ENCODE measurements at regions of chr10 and their contacts with region 1.

Region 1: GRCh38 chr10:59906417-59907202 is at the start of gene CCDC6:
- DNase-seq: peak; percentile 91 to 93 (median 93)
- H3K4me3 ChIP-seq: peak within 1 kb of the TSS; percentile 80 to 81
- H3K4me3 Mint-ChIP-seq: peak within 1 kb of the TSS; percentile 93 to 98 (median 96)
- H3K27ac ChIP-seq: peak within 1 kb of the TSS; percentile 77
- H3K27ac Mint-ChIP-seq: peak within 1 kb of the TSS; percentile 89 to 99 (median 96)
- H3K4me1 ChIP-seq: peaks cover 56% of the 10 kb centered on the region
- H3K4me1 Mint-ChIP-seq: peaks cover 46 to 61% (median 57%) of the 10 kb centered on the region in 4 donors
- H3K27me3 ChIP-seq: no peaks in the 10 kb centered on the region
- H3K27me3 Mint-ChIP-seq: no peaks in the 10 kb centered on the region
- total RNA-seq, gene CCDC6: 20.9 to 22.5 TPM

Region 2: GRCh38 chr10:58268870-58269605 is 1637.6 kb before region 1 on chr10 and contains the start of gene CISD1:
- CTCF ChIA-PET with region 1: no interaction called
- POLR2A ChIA-PET with region 1: interaction called, 4 read pairs
- intact Hi-C with region 1: loop called (anchors 2 kb)
- DNase-seq: peak; percentile 90 to 98 (median 95)
- H3K4me3 ChIP-seq: peak within 1 kb of the TSS; percentile 70 to 84
- H3K4me3 Mint-ChIP-seq: peak within 1 kb of the TSS; percentile 95 to 98 (median 97)
- H3K27ac ChIP-seq: peak within 1 kb of the TSS; percentile 81
- H3K27ac Mint-ChIP-seq: peak within 1 kb of the TSS; percentile 95 to 99 (median 97)
- H3K4me1 ChIP-seq: peaks cover 38% of the 10 kb centered on the region
- H3K4me1 Mint-ChIP-seq: peaks cover 18 to 49% (median 32%) of the 10 kb centered on the region in 4 donors
- H3K27me3 ChIP-seq: no peaks in the 10 kb centered on the region
- H3K27me3 Mint-ChIP-seq: no peaks in the 10 kb centered on the region
- total RNA-seq, gene CISD1: 13.7 to 15.8 TPM

Region 3: GRCh38 chr10:59830601-59831259 is 75.9 kb before region 1 on chr10:
- CTCF ChIA-PET with region 1: interaction called, 5 read pairs
- POLR2A ChIA-PET with region 1: interaction called, 4 read pairs
- intact Hi-C with region 1: loop called (anchors 2 kb)
- DNase-seq: peak in 3 of 5 donors; percentile 5 to 14 (median 11)
- H3K4me3 ChIP-seq: no peak overlapping the region
- H3K4me3 Mint-ChIP-seq: no peak overlapping the region
- H3K27ac ChIP-seq: no peak overlapping the region
- H3K27ac Mint-ChIP-seq: peak overlapping the region in 1 of 7 donors; percentile 14
- H3K4me1 ChIP-seq: no peaks in the 10 kb centered on the region
- H3K4me1 Mint-ChIP-seq: peaks cover 18 to 49% (median 34%) of the 10 kb centered on the region in 4 donors
- H3K27me3 ChIP-seq: no peaks in the 10 kb centered on the region
- H3K27me3 Mint-ChIP-seq: no peaks in the 10 kb centered on the region

Region 4: DNA sequence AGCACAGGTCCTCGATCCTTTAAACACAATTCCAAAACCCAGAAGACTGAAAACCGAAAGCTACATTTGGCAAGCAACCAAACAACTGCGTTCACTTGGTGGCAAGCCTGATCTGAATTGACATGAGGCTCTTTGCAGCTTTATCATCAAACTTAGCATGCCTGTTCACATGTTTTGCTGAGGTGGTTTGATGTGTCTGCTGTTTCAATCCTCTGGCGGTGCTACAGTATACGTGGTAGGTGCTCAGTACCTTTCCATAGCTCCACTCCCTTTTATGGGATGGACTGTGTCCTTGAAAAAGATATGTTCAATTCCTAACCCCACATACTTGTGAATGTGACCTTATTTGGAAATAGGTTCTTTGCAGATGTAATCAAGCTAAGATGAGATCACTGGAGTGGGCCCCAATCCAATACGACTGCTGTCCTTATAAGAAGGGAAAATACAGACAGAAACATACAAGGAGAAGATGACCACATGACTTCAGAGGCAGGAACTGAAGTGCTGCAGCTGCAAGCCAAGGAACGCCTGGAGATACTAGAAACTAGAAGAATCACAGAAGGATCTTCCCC is 33.6 kb before region 1 on chr10:
- CTCF ChIA-PET with region 1: interaction called, 12 read pairs
- POLR2A ChIA-PET with region 1: interaction called, 5 read pairs
- intact Hi-C with region 1: no loop called
- DNase-seq: no peak
- H3K4me3 ChIP-seq: no peak overlapping the region
- H3K4me3 Mint-ChIP-seq: peak overlapping the region; percentile 28 to 79 (median 56)
- H3K27ac ChIP-seq: no peak overlapping the region
- H3K27ac Mint-ChIP-seq: peak overlapping the region in 4 of 7 donors; percentile 15 to 82 (median 20)
- H3K4me1 ChIP-seq: peaks cover 48% of the 10 kb centered on the region
- H3K4me1 Mint-ChIP-seq: peaks cover 52 to 84% (median 70%) of the 10 kb centered on the region in 4 donors
- H3K27me3 ChIP-seq: no peaks in the 10 kb centered on the region
- H3K27me3 Mint-ChIP-seq: no peaks in the 10 kb centered on the region

Region 5: DNA sequence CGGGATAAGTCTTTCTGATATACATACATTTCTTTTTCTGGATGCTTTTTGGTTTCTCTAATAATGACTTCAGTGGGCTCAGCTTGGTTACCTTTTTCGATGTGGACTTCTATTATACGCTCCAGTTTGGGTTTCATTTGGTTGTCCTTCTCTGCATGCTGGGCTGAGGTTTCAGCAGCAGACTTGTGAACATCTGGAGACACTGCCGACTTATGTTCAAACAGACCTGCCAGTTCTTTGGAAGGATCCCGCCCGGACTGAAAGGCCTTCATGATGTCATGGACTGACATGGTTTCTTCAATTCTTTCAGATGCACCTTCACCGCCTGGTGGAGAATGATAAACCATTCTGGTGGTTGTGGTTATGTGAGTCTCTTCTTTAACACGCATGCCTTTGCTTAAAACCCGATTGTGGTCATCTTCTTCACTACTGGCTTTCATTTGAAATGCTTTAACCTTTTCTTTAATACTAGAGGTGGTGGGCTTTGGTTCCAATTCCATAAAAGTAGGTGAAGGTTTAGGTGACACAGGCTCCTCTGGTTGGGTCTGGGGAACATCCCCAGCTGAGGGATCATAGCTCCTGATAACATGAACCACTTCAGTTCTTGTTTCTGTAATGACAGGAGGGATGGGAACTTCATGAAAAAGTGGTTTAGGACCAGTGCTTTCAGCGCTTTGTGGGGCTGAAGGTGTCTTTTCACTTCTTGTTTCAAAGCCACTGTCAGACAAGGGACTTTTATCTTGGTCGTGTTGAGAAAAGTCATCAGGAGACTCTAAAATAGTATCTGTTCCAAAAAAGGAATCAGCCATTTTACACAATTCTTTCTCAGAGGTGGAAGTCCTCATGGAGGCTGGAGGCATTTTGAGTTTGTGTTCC is 167.4 kb after region 1 on chr10:
- CTCF ChIA-PET with region 1: no interaction called
- POLR2A ChIA-PET with region 1: no interaction called
- intact Hi-C with region 1: no loop called
- DNase-seq: no peak
- H3K4me3 ChIP-seq: no peak overlapping the region
- H3K4me3 Mint-ChIP-seq: no peak overlapping the region
- H3K27ac ChIP-seq: no peak overlapping the region
- H3K27ac Mint-ChIP-seq: peak overlapping the region in 1 of 7 donors; percentile 26
- H3K4me1 ChIP-seq: no peaks in the 10 kb centered on the region
- H3K4me1 Mint-ChIP-seq: no peaks in the 10 kb centered on the region
- H3K27me3 ChIP-seq: no peaks in the 10 kb centered on the region
- H3K27me3 Mint-ChIP-seq: no peaks in the 10 kb centered on the region

Region 6: GRCh38 chr10:60733189-60733822 is 826.7 kb after region 1 on chr10:
- CTCF ChIA-PET with region 1: no interaction called
- POLR2A ChIA-PET with region 1: interaction called, 3 read pairs
- intact Hi-C with region 1: loop called (anchors 5 kb)
- DNase-seq: peak; percentile 50 to 67 (median 55)
- H3K4me3 ChIP-seq: peak overlapping the region in 1 of 2 donors; percentile 70
- H3K4me3 Mint-ChIP-seq: peak overlapping the region; percentile 65 to 100 (median 84)
- H3K27ac ChIP-seq: peak overlapping the region; percentile 72
- H3K27ac Mint-ChIP-seq: peak overlapping the region in 6 of 7 donors; percentile 72 to 99 (median 88)
- H3K4me1 ChIP-seq: peaks cover 47% of the 10 kb centered on the region
- H3K4me1 Mint-ChIP-seq: peaks cover 24 to 41% (median 35%) of the 10 kb centered on the region in 4 donors
- H3K27me3 ChIP-seq: no peaks in the 10 kb centered on the region
- H3K27me3 Mint-ChIP-seq: no peaks in the 10 kb centered on the region

Measured in CD4-positive, alpha-beta memory T cell (primary cell).